ENCODE measurements at regions of chr6 and their contacts with region 1.

Region 1: DNA sequence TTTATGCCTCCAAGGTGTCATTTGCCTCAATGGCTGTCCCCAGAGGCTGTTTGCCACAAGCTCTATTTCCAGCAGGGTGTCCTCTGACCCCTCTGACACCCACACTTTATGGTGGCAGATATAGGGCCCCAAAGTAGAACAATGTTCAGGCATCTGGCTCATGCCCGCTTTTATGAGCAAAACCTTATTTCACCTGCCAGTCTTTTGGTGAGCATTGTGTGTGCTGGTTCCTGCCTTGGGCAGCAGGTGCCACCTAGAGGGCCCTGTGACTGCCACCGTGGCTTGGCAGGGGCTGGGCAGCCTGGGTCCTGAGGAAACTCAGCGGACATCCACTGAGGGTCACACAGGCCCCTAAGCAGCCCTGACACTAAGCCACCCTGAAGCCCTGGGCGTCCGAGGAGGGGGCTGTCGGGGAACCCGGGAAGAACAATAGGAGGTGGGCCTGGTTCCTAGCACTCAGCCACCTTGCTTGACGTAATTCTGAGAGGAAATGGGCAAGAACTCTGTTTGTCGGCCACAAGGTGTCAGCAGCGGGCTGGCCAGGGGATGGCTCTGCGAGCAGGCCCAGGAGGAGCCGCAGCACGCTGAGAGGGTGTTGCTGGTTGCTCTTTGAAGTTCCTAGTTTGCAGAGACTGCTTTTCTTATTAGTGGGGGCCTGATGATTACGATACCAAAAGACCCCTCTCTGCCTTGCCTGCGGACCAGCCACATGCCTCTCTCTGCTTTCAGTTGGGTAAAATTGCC is 148.9 kb downstream of the SCML4 start:
- DNase-seq: peak; percentile 84
- CTCF ChIP-seq: peak; percentile 96

Region 2: GRCh38 chr6:107093644-107094043 is 581.5 kb before region 1 on chr6:
- in situ Hi-C with region 1: no loop called
- DNase-seq: no peak
- CTCF ChIP-seq: no peak

Region 3: GRCh38 chr6:107192830-107193229 is 482.3 kb before region 1 on chr6:
- in situ Hi-C with region 1: no loop called
- DNase-seq: no peak
- CTCF ChIP-seq: no peak

Region 4: DNA sequence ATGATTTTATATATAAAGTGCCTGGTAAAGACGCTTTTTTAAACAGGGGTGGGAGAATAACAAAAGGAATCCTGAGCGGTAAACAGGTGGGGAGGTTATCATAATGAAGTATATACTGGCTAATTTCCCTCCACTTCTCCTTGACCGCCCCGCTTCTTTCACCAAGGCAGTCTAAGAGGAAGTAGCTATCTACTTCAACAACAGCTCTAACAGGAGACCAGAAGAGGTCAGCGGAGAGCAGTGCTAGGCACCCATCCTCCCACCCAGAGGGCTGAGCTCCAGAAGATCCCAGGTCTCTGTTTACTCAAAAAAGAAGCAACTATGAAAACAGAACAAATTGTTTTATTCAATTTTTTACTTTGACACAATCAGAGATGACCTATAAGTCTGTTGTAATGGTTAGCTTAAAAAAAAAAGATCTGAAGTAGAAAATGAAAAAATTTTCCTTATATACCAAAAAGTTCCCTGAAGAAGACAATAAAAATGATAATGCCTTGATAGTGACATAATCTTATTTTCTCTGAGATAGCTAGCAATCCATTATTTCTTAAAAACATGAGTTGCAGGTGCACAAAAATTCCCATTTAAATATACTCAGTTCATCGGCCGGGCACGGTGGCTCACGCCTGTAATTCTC is 356.9 kb before region 1 on chr6:
- in situ Hi-C with region 1: loop called (anchors 25 kb)
- DNase-seq: peak; percentile 39
- CTCF ChIP-seq: peak; percentile 85

Region 5: DNA sequence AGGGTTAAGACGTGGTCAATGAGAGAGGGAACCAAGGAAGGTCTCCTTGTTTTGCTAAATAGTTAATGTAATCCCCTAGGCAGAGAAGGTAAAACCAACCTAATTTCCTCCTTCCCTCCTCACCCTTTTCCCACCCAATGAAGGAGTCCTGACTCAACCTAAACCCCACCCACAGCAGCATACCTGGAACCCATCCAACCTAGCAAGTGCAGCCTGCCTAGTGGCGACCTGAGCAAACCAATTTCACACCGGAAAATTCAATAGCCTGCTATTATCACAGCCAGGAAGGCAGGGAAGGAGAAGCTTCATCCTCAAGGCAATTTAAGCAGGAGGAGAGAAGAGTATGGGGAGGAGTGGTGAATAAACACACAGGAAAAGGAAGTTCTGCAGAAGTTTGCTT is 352.4 kb after region 1 on chr6:
- in situ Hi-C with region 1: loop called (anchors 25 kb)
- DNase-seq: no peak
- CTCF ChIP-seq: no peak

Measured in GM13977 (cell line).